Vagina (tissue), 2 donors: ENCODE measurements at regions of chr20 and their contacts with region 1.

Region 1: GRCh38 chr20:40689943-40690835 is 1.2 kb upstream of the MAFB start:
- DNase-seq: no peak
- H3K4me3 ChIP-seq: peak overlapping the region; percentile 54 to 68
- H3K27ac ChIP-seq: peak overlapping the region; percentile 86
- H3K4me1 ChIP-seq: peaks cover 13% of the 10 kb centered on the region
- H3K27me3 ChIP-seq: no peaks in the 10 kb centered on the region
- CTCF ChIP-seq: peak; percentile 47 to 93 (median 89)
- POLR2A ChIP-seq: peak in 1 of 2 donors; percentile 21

Region 2: DNA sequence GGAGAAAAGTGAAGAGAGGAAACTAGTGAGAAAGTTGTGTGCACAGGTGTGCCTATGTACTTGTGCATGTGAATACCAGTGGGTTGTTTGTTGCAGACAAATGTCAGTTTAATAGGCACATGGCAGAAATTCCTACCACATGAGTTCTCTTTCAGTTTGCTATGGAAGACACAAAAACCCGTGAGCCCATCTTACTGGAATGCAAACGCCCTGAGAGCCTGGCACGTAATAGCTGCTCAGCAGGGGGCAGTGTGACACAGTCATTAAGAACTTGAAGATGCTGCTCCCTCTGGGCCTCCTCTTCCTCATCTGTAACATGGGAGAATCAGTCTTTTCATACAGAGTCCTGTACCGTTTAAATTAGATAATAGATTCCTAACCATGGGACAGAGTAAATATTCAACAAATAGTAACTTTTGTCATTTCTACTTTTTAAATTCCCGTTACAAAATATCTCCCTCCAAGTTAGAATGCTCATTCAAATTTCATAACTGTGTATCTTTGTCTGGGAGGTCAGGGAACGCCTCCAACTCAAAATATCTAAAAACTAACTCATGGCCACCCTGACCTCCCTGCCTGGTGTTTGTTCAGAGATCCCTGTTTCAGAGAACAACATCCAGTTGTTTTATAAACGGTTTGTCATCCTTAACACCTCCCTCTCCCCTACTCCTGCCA is 804.1 kb before region 1 on chr20:
- intact Hi-C with region 1: loop called (anchors 5 kb)
- DNase-seq: no peak
- H3K4me3 ChIP-seq: no peak overlapping the region
- H3K27ac ChIP-seq: no peak overlapping the region
- H3K4me1 ChIP-seq: no peaks in the 10 kb centered on the region
- H3K27me3 ChIP-seq: no peaks in the 10 kb centered on the region
- CTCF ChIP-seq: peak in 2 of 3 experiments; percentile 19 to 32
- POLR2A ChIP-seq: no peak

Region 3: GRCh38 chr20:40156600-40157317 is 533.4 kb before region 1 on chr20:
- intact Hi-C with region 1: loop called (anchors 10 kb)
- DNase-seq: no peak
- H3K4me3 ChIP-seq: no peak overlapping the region
- H3K27ac ChIP-seq: no peak overlapping the region
- H3K4me1 ChIP-seq: no peaks in the 10 kb centered on the region
- H3K27me3 ChIP-seq: no peaks in the 10 kb centered on the region
- CTCF ChIP-seq: no peak
- POLR2A ChIP-seq: no peak

Region 4: DNA sequence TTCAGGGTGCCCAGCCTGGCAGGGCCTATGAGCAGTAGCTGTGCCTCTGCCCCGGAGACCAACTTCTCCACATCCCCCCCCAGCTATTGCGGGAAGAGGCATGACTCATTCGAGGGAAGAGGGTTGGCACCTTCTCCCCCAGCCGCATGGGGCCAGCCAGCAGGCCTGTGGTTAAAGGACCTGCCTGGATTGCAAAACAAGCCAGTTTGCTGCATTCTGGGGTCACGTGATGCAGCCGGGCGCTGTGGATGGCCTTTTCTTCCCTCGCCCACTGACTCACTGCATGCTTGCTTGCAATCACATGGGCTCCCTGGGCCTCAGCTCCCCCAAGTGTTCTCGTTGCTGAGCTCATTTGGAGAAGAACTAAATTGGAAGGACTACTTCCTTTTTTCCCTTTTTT is 183.6 kb before region 1 on chr20:
- intact Hi-C with region 1: loop called (anchors 10 kb)
- DNase-seq: peak in 1 of 2 donors; percentile 98
- H3K4me3 ChIP-seq: no peak overlapping the region
- H3K27ac ChIP-seq: no peak overlapping the region
- H3K4me1 ChIP-seq: peaks cover 24% of the 10 kb centered on the region
- H3K27me3 ChIP-seq: no peaks in the 10 kb centered on the region
- CTCF ChIP-seq: no peak
- POLR2A ChIP-seq: no peak

Region 5: DNA sequence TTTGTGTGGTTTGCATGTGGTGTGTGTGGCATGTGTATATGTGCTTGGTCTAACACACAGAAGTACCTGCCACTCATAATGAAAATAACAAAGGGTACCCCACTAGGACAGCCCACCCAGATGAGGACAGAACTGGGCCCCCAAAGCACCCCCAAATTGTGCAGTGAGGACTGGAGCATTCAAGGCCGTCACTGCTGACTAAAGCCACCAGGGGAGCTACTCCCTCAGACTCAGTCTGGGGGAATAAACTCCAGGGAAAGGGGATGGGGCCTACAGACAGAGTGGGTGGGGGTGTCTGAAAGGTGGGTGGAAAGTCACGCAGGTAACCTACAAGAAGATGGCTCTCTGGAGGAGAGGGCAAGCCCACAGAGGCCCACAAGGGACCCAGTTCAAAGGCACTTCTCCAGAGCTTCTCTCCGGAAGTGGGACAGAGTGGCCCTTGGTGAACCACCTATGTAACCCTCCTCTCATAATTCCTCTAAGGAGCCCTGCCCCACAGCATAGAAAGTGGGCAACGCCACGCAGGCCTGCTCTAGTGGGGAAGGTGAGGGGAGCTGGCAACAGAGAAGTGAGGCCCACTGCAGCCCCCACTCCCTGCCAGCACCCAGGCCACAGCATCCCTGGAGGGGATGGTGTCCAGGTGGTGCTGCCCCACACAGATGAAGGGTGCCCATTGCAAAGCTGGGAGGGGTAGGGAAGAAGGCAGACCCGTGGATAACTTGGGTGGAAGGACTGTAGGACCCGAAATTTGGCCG is 121.6 kb after region 1 on chr20:
- intact Hi-C with region 1: no loop called
- DNase-seq: peak in 1 of 2 donors; percentile 84
- H3K4me3 ChIP-seq: no peak overlapping the region
- H3K27ac ChIP-seq: no peak overlapping the region
- H3K4me1 ChIP-seq: no peaks in the 10 kb centered on the region
- H3K27me3 ChIP-seq: no peaks in the 10 kb centered on the region
- CTCF ChIP-seq: no peak
- POLR2A ChIP-seq: no peak